ENCODE measurements at regions of chr7 and their contacts with region 1.

Region 1: GRCh38 chr7:138002096-138002827 is 376 bp upstream of the CREB3L2 start:
- DNase-seq: peak; percentile 99 to 100 (median 99)
- ATAC-seq: peak; percentile 93
- H3K4me3 ChIP-seq: peak overlapping the region; percentile 82
- H3K27ac ChIP-seq: peak overlapping the region; percentile 77
- H3K4me1 ChIP-seq: peaks cover 13 to 32% of the 10 kb centered on the region in 2 experiments
- H3K27me3 ChIP-seq: no peaks in the 10 kb centered on the region
- CTCF ChIP-seq: peak; percentile 90 to 99 (median 99)
- EP300 ChIP-seq: 0 out of 2 replicates have a peak, but pooled peaks have one; percentile 25
- POLR2A ChIP-seq: no peak
- RAD21 ChIP-seq: peak; percentile 53 to 64

Region 2: GRCh38 chr7:137371616-137372015 is 630.6 kb before region 1 on chr7:
- CTCF ChIA-PET with region 1: no interaction called
- POLR2A ChIA-PET with region 1: no interaction called
- in situ Hi-C with region 1: no loop called
- intact Hi-C with region 1: no loop called
- DNase-seq: no peak
- ATAC-seq: no peak
- H3K4me3 ChIP-seq: no peak overlapping the region
- H3K27ac ChIP-seq: no peak overlapping the region
- H3K4me1 ChIP-seq: no peaks in the 10 kb centered on the region
- H3K27me3 ChIP-seq: no peaks in the 10 kb centered on the region
- CTCF ChIP-seq: no peak
- EP300 ChIP-seq: no peak
- POLR2A ChIP-seq: no peak
- RAD21 ChIP-seq: no peak

Region 3: GRCh38 chr7:137909037-137909436 is 93.2 kb before region 1 on chr7:
- CTCF ChIA-PET with region 1: interaction called, 63 read pairs
- POLR2A ChIA-PET with region 1: interaction called, 3 read pairs
- in situ Hi-C with region 1: loop called (anchors 5 kb)
- intact Hi-C with region 1: no loop called
- DNase-seq: no peak
- ATAC-seq: no peak
- H3K4me3 ChIP-seq: no peak overlapping the region
- H3K27ac ChIP-seq: no peak overlapping the region
- H3K4me1 ChIP-seq: 0 out of 5 replicates have a peak, but pooled peaks cover 0 to under 1% of the 10 kb centered on the region in 2 experiments
- H3K27me3 ChIP-seq: no peaks in the 10 kb centered on the region
- CTCF ChIP-seq: no peak
- EP300 ChIP-seq: no peak
- POLR2A ChIP-seq: no peak
- RAD21 ChIP-seq: no peak

Region 4: DNA sequence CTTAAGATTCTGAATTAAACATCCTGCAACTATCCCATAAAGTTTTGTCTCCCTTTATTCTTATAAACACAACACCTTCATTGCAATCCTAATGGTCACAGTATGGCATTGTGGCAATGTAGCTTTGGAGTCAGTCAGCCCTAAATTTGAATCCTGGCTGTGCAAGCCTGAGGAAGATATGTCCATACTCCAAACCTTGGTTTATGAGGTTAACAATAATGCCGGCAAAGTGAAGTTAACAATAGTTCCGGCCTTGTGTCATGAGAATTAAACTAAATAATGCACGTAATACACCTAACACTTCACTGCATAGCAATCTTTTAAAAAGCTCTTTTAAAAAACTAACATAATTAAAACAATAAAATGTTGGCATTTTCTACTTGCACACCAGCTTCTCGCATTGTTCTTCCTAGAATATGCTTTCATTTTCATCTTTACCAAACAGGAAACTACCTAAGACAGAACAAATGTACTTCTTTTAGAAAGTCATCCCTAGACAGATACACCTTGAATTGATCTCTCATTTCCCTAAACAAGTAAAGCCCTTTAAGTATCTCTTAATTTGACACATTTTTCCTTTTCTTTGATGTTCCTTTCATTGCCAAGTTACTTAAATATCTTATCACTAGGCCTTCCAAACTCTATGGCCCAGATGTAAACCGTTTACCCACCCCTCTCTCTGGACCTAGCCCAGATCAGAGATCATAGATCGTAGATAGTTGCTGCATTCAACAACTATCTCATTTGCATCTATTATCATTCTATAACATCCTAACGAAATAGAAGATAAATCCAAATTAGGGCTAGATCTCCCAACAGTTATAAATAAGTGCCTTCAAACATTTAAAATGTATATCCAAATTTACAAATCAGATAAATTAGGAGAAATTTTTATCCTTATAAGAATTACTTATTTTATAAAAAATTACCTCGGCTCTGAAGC is 67.0 kb before region 1 on chr7:
- CTCF ChIA-PET with region 1: no interaction called
- POLR2A ChIA-PET with region 1: interaction called, 4 read pairs
- in situ Hi-C with region 1: no loop called
- intact Hi-C with region 1: loop called (anchors 1 kb)
- DNase-seq: no peak
- ATAC-seq: 0 out of 3 replicates have a peak, but pooled peaks have one; percentile 3
- H3K4me3 ChIP-seq: peak overlapping the region; percentile 9; the same call in 1 of the 2 replicates
- H3K27ac ChIP-seq: peak overlapping the region; percentile 60
- H3K4me1 ChIP-seq: peaks cover 18 to 58% of the 10 kb centered on the region in 2 experiments
- H3K27me3 ChIP-seq: no peaks in the 10 kb centered on the region
- CTCF ChIP-seq: no peak
- EP300 ChIP-seq: no peak
- POLR2A ChIP-seq: no peak
- RAD21 ChIP-seq: no peak

Region 5: GRCh38 chr7:137985253-137985896 is 16.9 kb before region 1 on chr7:
- CTCF ChIA-PET with region 1: no interaction called
- POLR2A ChIA-PET with region 1: interaction called, 14 read pairs
- in situ Hi-C with region 1: no loop called
- intact Hi-C with region 1: no loop called
- DNase-seq: no peak
- ATAC-seq: peak; percentile 10; the same call in 1 of the 3 replicates
- H3K4me3 ChIP-seq: no peak overlapping the region
- H3K27ac ChIP-seq: peak overlapping the region; percentile 38; the same call in 1 of the 3 replicates
- H3K4me1 ChIP-seq: peaks cover 41 to 53% of the 10 kb centered on the region in 2 experiments
- H3K27me3 ChIP-seq: no peaks in the 10 kb centered on the region
- CTCF ChIP-seq: no peak
- EP300 ChIP-seq: no peak
- POLR2A ChIP-seq: no peak
- RAD21 ChIP-seq: no peak

Measured in K562 (cell line).